ENCODE measurements at regions of chr14 and their contacts with region 1.

Region 1: GRCh38 chr14:91418387-91419043 is 895 bp upstream of the CCDC88C start:
- DNase-seq: peak; percentile 67
- H3K4me3 ChIP-seq: peak overlapping the region in 1 of 3 experiments; percentile 73
- H3K27ac ChIP-seq: no peak overlapping the region
- H3K4me1 ChIP-seq: peaks cover 25% of the 10 kb centered on the region
- H3K27me3 ChIP-seq: no peaks in the 10 kb centered on the region
- CTCF ChIP-seq: peak; percentile 94 to 96
- POLR2A ChIP-seq: no peak

Region 2: GRCh38 chr14:91060351-91061055 is 358.0 kb before region 1 on chr14 and contains the start of gene RPS6KA5:
- CTCF ChIA-PET with region 1: no interaction called
- POLR2A ChIA-PET with region 1: no interaction called
- dilution Hi-C with region 1: no loop called
- intact Hi-C with region 1: loop called (anchors 10 kb)
- DNase-seq: peak; percentile 100
- H3K4me3 ChIP-seq: peak within 1 kb of the TSS; percentile 68 to 100 (median 71)
- H3K27ac ChIP-seq: peak within 1 kb of the TSS; percentile 75
- H3K4me1 ChIP-seq: peaks cover 22% of the 10 kb centered on the region
- H3K27me3 ChIP-seq: no peaks in the 10 kb centered on the region
- CTCF ChIP-seq: no peak
- POLR2A ChIP-seq: peak; percentile 41
- total RNA-seq, gene RPS6KA5: 5.4 and 8.8 TPM in 2 replicates

Region 3: GRCh38 chr14:91317381-91318308 is 100.9 kb before region 1 on chr14:
- CTCF ChIA-PET with region 1: interaction called, 196 read pairs
- POLR2A ChIA-PET with region 1: no interaction called
- dilution Hi-C with region 1: no loop called
- intact Hi-C with region 1: no loop called
- DNase-seq: peak; percentile 52
- H3K4me3 ChIP-seq: no peak overlapping the region
- H3K27ac ChIP-seq: no peak overlapping the region
- H3K4me1 ChIP-seq: peaks cover 23% of the 10 kb centered on the region
- H3K27me3 ChIP-seq: no peaks in the 10 kb centered on the region
- CTCF ChIP-seq: peak; percentile 15 to 39
- POLR2A ChIP-seq: no peak

Region 4: GRCh38 chr14:91373591-91374254 is 44.8 kb before region 1 on chr14:
- CTCF ChIA-PET with region 1: interaction called, 3 read pairs
- POLR2A ChIA-PET with region 1: no interaction called
- dilution Hi-C with region 1: no loop called
- intact Hi-C with region 1: loop called (anchors 1 kb)
- DNase-seq: peak; percentile 63
- H3K4me3 ChIP-seq: peak overlapping the region in 1 of 3 experiments; percentile 25
- H3K27ac ChIP-seq: peak overlapping the region; percentile 29
- H3K4me1 ChIP-seq: peaks cover 56% of the 10 kb centered on the region
- H3K27me3 ChIP-seq: no peaks in the 10 kb centered on the region
- CTCF ChIP-seq: no peak
- POLR2A ChIP-seq: no peak

Region 5: DNA sequence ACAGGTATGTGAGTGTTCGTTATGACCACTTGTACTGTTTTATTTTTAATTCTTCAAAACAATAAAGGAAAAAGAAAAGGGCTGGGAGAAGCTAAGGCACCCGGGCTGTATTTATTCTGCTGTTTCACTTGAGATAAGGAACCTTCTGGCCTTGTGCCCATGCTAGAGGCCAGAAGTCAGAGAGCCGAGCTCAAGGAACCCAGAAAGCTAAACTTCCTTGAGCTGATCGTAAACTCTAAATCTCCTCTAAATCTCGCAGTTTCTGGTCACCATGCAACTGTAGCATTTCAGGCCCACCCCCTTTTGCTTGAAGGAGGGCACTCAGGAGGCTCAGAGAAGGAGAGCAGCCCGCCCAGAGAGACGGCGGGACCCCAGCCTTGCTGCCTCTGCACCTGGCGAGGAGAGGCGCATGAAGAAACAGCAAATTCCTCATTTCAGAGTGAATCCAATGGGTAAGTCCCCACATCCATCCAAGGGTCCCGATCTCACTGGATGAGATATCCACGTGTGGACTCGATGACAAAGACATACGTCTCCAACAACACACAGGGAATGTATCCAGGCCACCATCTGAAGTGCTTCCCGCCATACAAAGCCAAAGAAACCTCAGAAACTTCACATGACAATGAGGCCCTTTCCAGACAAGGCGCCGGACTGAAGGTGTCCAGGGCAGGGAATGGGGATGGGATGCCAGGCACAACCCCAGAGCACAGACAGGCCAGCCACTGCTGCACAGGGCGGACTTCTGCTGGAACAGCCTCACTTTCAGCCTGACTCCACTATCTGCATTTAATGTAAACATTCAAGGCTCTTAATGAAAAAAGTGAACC is 15.5 kb before region 1 on chr14:
- CTCF ChIA-PET with region 1: interaction called, 13 read pairs
- POLR2A ChIA-PET with region 1: no interaction called
- dilution Hi-C with region 1: no loop called
- intact Hi-C with region 1: loop called (anchors 1 kb)
- DNase-seq: peak; percentile 94
- H3K4me3 ChIP-seq: peak overlapping the region in 1 of 3 experiments; percentile 13
- H3K27ac ChIP-seq: peak overlapping the region; percentile 36
- H3K4me1 ChIP-seq: peaks cover 32% of the 10 kb centered on the region
- H3K27me3 ChIP-seq: no peaks in the 10 kb centered on the region
- CTCF ChIP-seq: no peak
- POLR2A ChIP-seq: no peak

Region 6: GRCh38 chr14:91510174-91511042 is 91.9 kb after region 1 on chr14 and contains the start of gene PPP4R3A:
- CTCF ChIA-PET with region 1: no interaction called
- POLR2A ChIA-PET with region 1: no interaction called
- dilution Hi-C with region 1: no loop called
- intact Hi-C with region 1: no loop called
- DNase-seq: peak; percentile 96
- H3K4me3 ChIP-seq: peak within 1 kb of the TSS; percentile 56 to 97 (median 85)
- H3K27ac ChIP-seq: peak within 1 kb of the TSS; percentile 83
- H3K4me1 ChIP-seq: peaks cover 17% of the 10 kb centered on the region
- H3K27me3 ChIP-seq: no peaks in the 10 kb centered on the region
- CTCF ChIP-seq: no peak
- POLR2A ChIP-seq: peak; percentile 89
- total RNA-seq, gene PPP4R3A: 77.0 and 83.5 TPM in 2 replicates

Region 7: GRCh38 chr14:91660790-91661189 is 242.3 kb after region 1 on chr14:
- CTCF ChIA-PET with region 1: no interaction called
- POLR2A ChIA-PET with region 1: no interaction called
- dilution Hi-C with region 1: no loop called
- intact Hi-C with region 1: no loop called
- DNase-seq: no peak
- H3K4me3 ChIP-seq: no peak overlapping the region
- H3K27ac ChIP-seq: no peak overlapping the region
- H3K4me1 ChIP-seq: no peaks in the 10 kb centered on the region
- H3K27me3 ChIP-seq: no peaks in the 10 kb centered on the region
- CTCF ChIP-seq: no peak
- POLR2A ChIP-seq: no peak